ENCODE measurements at regions of chr5 and their contacts with region 1.

Region 1: GRCh38 chr5:151758430-151759241 is at the start of gene ATOX1:
- DNase-seq: peak; percentile 91
- ATAC-seq: peak; percentile 100
- H3K4me3 Mint-ChIP-seq: peak within 1 kb of the TSS; percentile 89
- H3K27ac Mint-ChIP-seq: peak within 1 kb of the TSS; percentile 84
- H3K4me1 Mint-ChIP-seq: peaks cover 38% of the 10 kb centered on the region
- H3K27me3 Mint-ChIP-seq: no peaks in the 10 kb centered on the region
- CTCF ChIP-seq: no peak
- total RNA-seq, gene ATOX1: 61.2 and 66.6 TPM in 2 replicates

Region 2: GRCh38 chr5:151427258-151427657 is 331.4 kb before region 1 on chr5:
- CTCF ChIA-PET with region 1: no interaction called
- POLR2A ChIA-PET with region 1: no interaction called
- intact Hi-C with region 1: no loop called
- DNase-seq: peak; percentile 22
- ATAC-seq: peak; percentile 97
- H3K4me3 Mint-ChIP-seq: no peak overlapping the region
- H3K27ac Mint-ChIP-seq: peak overlapping the region; percentile 62
- H3K4me1 Mint-ChIP-seq: peaks cover 22% of the 10 kb centered on the region
- H3K27me3 Mint-ChIP-seq: peaks cover 14% of the 10 kb centered on the region
- CTCF ChIP-seq: no peak

Region 3: DNA sequence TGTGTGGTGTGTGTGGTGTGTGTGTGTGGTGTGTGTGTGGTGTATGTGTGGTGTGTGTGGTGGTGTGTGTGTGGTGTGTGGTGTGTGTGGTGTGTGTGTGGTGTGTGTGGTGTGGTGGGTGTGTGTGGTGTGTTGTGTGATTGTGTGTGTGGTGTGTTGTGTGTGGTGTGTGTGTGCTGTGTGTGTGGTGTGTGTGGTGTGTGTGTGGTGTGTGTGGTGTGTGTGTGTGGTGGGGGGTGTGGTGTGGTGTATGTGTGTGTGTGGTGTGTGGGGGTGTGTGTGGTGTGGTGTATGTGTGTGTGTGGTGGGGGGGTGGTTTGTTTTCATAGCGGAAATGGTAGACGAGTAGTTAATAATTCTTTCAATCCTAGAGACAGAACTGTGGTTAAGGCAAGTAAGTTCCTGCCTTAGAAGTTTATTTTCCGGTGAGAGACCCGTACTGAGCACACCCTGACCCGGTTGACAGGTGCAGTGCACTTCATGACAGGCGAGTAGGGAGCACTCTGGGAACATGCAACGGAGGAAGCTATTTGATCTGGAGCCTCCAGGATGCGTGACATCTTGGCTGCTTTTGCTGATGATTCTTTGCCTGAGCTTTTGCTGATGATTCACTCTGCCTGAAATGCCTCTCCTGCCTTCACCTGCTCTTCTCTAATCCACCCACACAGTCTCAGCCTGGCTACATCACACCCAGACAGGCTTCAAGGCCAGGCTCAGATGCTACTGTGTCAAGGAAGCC is 145.8 kb before region 1 on chr5:
- CTCF ChIA-PET with region 1: no interaction called
- POLR2A ChIA-PET with region 1: interaction called, 12 read pairs
- intact Hi-C with region 1: no loop called
- DNase-seq: no peak
- ATAC-seq: no peak
- H3K4me3 Mint-ChIP-seq: no peak overlapping the region
- H3K27ac Mint-ChIP-seq: no peak overlapping the region
- H3K4me1 Mint-ChIP-seq: peaks cover 8% of the 10 kb centered on the region
- H3K27me3 Mint-ChIP-seq: peaks cover 23% of the 10 kb centered on the region
- CTCF ChIP-seq: no peak

Region 4: GRCh38 chr5:151740336-151740942 is 18.2 kb before region 1 on chr5:
- CTCF ChIA-PET with region 1: interaction called, 3 read pairs
- POLR2A ChIA-PET with region 1: no interaction called
- intact Hi-C with region 1: loop called (anchors 1 kb)
- DNase-seq: no peak
- ATAC-seq: peak; percentile 69
- H3K4me3 Mint-ChIP-seq: no peak overlapping the region
- H3K27ac Mint-ChIP-seq: no peak overlapping the region
- H3K4me1 Mint-ChIP-seq: peaks cover 16% of the 10 kb centered on the region
- H3K27me3 Mint-ChIP-seq: no peaks in the 10 kb centered on the region
- CTCF ChIP-seq: peak; percentile 68

Region 5: GRCh38 chr5:152016421-152016820 is 257.8 kb after region 1 on chr5:
- CTCF ChIA-PET with region 1: no interaction called
- POLR2A ChIA-PET with region 1: no interaction called
- intact Hi-C with region 1: no loop called
- DNase-seq: no peak
- ATAC-seq: no peak
- H3K4me3 Mint-ChIP-seq: no peak overlapping the region
- H3K27ac Mint-ChIP-seq: no peak overlapping the region
- H3K4me1 Mint-ChIP-seq: no peaks in the 10 kb centered on the region
- H3K27me3 Mint-ChIP-seq: peaks cover 1% of the 10 kb centered on the region
- CTCF ChIP-seq: no peak

Measured in activated B cell treated with CpG ODN at 0.5 μM for 24 hours (primary cell).